Vagina (tissue), 2 donors: ENCODE measurements at regions of chr19 and their contacts with region 1.

Region 1: DNA sequence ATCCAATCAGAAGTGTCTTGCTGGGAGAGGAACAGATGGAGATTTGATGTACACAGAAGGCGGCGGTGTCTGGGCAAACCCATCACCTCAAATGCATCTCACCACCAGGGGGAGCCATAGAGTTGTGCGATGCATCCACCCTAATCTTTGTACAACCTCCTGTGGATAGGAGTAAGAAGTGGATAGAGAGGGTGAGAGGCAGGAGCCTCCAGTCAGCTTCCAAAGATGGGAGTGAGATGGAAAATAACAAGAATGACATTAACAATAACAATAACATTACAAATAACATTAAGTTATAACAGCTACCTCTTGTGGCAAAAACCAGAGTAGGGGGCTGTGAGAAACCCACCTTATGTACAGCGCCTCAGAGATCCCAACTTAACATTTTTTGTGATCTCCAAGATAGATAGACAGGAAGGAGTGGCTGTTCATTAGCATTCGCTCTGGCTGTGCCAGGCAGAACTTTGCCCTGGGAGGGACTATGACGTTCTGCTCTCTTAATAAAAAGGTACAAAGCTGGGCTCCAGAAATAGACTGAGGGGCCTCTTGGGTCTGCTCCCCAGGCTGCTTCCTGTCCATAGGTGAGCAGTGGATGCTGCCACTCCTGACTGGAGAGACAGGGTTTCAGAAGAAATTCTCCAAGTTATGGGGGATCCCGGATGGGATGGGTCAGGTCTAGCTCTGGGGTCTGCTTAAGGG is 5.2 kb upstream of the CEACAM18 start:
- DNase-seq: no peak
- H3K4me3 ChIP-seq: no peak overlapping the region
- H3K27ac ChIP-seq: no peak overlapping the region
- H3K4me1 ChIP-seq: no peaks in the 10 kb centered on the region
- H3K27me3 ChIP-seq: no peaks in the 10 kb centered on the region
- CTCF ChIP-seq: peak in 2 of 3 experiments; percentile 53 to 72
- POLR2A ChIP-seq: no peak

Region 2: GRCh38 chr19:51460164-51460992 is 12.8 kb before region 1 on chr19:
- intact Hi-C with region 1: loop called (anchors 1 kb)
- DNase-seq: no peak
- H3K4me3 ChIP-seq: no peak overlapping the region
- H3K27ac ChIP-seq: no peak overlapping the region
- H3K4me1 ChIP-seq: no peaks in the 10 kb centered on the region
- H3K27me3 ChIP-seq: no peaks in the 10 kb centered on the region
- CTCF ChIP-seq: no peak
- POLR2A ChIP-seq: no peak

Region 3: DNA sequence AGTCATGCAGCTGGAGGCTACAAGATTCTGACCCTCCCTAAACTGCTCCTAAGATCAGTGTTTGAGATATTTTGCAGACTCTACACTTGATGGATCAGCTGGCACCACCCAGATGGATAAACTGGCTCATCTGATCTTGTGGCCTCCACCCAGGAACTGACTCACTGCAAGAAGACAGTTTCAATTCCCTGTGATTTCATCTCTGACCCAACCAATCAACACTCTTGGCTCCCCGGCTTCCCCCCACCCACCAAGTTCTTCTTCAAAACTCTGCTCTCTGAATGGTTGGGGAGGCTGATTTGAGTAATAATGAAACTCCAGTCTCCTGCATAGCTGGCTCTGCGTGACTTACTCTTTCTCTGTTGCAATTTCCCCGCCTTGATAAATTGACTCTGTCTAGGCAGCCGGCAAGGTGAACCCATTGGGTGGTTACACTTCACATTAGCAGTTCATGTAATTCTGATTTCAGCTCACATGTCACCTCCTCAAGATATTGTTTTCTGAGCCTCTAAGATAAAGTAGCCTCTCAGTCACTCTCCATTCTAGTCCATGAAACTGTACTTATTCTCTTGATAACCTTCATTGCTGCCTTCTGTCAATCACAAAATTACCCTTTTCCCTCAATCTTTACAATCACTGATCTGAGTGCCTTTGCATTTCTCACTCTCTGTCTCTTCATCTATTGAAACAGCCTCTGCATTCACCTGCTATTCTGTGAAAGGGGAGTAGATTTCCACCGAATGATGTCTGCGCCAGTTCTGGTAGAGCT is 311.9 kb after region 1 on chr19:
- intact Hi-C with region 1: loop called (anchors 10 kb)
- DNase-seq: no peak
- H3K4me3 ChIP-seq: no peak overlapping the region
- H3K27ac ChIP-seq: peak overlapping the region; percentile 24
- H3K4me1 ChIP-seq: no peaks in the 10 kb centered on the region
- H3K27me3 ChIP-seq: no peaks in the 10 kb centered on the region
- CTCF ChIP-seq: no peak
- POLR2A ChIP-seq: no peak